ENCODE measurements at regions of chr6 and their contacts with region 1.

Region 1: GRCh38 chr6:28940858-28941680 is 17.3 kb upstream of the TRIM27 start:
- DNase-seq: peak; percentile 90
- H3K4me3 ChIP-seq: peak overlapping the region; percentile 46 to 61 (median 53)
- H3K27ac ChIP-seq: peak overlapping the region; percentile 66 to 84 (median 78)
- H3K4me1 ChIP-seq: peaks cover 0 to 24% (median 15%) of the 10 kb centered on the region in 4 donors
- H3K27me3 ChIP-seq: no peaks in the 10 kb centered on the region
- CTCF ChIP-seq: no peak
- EP300 ChIP-seq: no peak
- POLR2A ChIP-seq: no peak

Region 2: GRCh38 chr6:27479319-27480182 is 1461.5 kb before region 1 on chr6:
- intact Hi-C with region 1: loop called (anchors 5 kb)
- DNase-seq: peak; percentile 91
- H3K4me3 ChIP-seq: peak overlapping the region; percentile 64 to 74 (median 68)
- H3K27ac ChIP-seq: peak overlapping the region; percentile 91 to 96 (median 95)
- H3K4me1 ChIP-seq: peaks cover 0 to 14% (median 9%) of the 10 kb centered on the region in 4 donors
- H3K27me3 ChIP-seq: no peaks in the 10 kb centered on the region
- CTCF ChIP-seq: no peak
- EP300 ChIP-seq: no peak
- POLR2A ChIP-seq: no peak

Region 3: DNA sequence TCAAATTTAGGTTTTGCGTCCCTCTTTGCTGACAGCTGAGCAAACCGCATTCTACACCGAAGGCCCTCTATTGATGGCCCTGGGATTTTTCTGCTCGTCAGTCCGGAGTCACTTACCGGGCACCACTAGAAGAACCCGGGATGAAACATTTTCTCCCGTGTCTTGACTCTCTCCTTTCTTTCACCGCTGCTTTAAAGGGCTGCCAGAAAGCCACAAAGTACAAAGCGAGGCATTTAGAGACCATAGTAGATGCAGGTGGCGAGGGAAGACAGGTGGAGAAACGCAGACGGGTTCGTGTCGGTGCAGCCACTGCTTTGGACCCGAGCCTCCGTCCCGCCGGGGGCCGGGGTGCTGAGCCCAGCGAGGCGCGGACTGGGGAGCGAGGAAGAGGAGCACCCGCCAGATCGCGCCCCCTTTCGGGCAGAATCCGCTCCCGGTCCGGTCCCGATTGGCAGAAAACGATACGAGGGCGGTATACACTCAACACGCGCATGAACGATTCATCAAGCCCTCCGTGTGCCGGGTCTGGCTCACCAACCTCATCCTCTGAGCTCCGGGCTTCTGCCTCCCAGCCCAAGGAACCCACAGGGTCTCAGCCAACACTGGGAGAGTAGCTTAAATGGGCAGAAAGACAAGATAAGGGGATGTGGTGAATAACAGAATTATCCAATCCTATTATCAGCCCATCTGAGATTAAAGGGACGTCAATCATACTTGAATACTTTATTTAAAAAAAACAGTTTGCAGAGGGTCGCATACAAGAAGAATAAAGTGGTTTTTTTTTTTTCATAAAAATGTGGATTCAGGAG is 102.2 kb before region 1 on chr6:
- intact Hi-C with region 1: loop called (anchors 5 kb)
- DNase-seq: peak; percentile 90
- H3K4me3 ChIP-seq: peak overlapping the region; percentile 47 to 59 (median 58)
- H3K27ac ChIP-seq: peak overlapping the region; percentile 76 to 80 (median 78)
- H3K4me1 ChIP-seq: peaks cover 0 to 16% (median 11%) of the 10 kb centered on the region in 4 donors
- H3K27me3 ChIP-seq: peaks cover 0 to 16% (median 1%) of the 10 kb centered on the region in 3 donors
- CTCF ChIP-seq: peak; percentile 16 to 60 (median 27)
- EP300 ChIP-seq: no peak
- POLR2A ChIP-seq: no peak

Region 4: DNA sequence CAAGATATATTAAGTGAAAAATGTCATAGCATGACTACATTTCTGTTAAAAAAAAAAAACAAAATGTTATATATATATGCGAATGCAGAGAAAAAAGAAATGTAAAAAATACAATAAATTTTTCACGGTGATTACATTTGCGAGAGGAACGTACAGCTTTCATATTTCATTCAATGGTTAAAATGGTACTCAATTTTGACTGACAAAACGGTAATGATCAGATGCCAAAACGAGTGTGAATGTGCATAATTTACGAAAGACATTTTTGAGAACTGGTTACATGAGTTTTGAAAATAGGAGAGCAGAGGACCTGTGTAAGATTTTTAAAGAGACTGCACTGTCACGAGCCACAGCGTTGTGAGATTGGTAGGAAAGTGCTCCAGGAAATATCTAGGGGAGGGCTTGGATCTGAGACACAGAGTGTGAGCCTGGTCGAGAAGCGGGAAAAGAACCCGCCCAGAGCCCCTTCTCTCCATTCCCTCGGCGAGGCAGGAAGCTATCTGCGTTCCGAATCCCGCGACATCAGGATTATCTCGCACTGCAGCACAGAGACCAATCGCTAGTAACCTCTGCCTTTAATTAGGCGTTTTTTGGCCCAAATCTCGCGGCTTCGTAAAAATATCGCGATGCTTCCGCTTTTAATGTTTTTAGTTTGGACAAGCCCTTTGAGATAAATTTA is 45.8 kb before region 1 on chr6:
- intact Hi-C with region 1: loop called (anchors 1 kb)
- DNase-seq: peak; percentile 97
- H3K4me3 ChIP-seq: peak overlapping the region; percentile 58 to 76 (median 70)
- H3K27ac ChIP-seq: peak overlapping the region; percentile 96 to 99 (median 97)
- H3K4me1 ChIP-seq: peaks cover 0 to 16% (median 7%) of the 10 kb centered on the region in 4 donors
- H3K27me3 ChIP-seq: no peaks in the 10 kb centered on the region
- CTCF ChIP-seq: no peak
- EP300 ChIP-seq: no peak
- POLR2A ChIP-seq: peak; percentile 38 to 64

Region 5: DNA sequence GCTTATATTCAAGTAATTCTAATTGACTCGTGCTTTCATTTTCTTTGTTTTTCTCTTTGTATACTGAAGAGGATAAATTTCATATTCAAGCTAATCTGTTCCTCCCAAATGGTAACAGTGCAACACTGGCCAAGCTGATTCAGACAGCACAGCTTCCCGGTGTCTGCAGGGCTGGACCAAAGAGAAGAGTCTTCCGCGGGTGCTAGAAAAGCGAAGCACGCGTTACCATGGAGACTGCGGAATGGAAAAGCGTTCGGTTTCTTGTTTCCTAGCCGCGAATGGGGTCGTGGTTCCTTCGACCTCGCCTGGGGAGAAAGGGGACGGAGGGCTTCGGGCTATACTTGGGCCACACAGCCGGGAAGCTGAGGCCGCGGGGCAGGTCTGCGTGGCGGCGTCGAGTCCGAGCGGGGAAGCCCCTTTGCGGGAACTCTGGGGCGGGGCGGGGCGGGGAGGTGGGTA is 70.2 kb after region 1 on chr6:
- intact Hi-C with region 1: loop called (anchors 2 kb)
- DNase-seq: peak; percentile 76
- H3K4me3 ChIP-seq: peak overlapping the region; percentile 25 to 53 (median 45)
- H3K27ac ChIP-seq: peak overlapping the region in 1 of 4 donors; percentile 6
- H3K4me1 ChIP-seq: peaks cover 0 to 24% (median 16%) of the 10 kb centered on the region in 4 donors
- H3K27me3 ChIP-seq: peaks cover 9 to 22% (median 17%) of the 10 kb centered on the region in 3 donors
- CTCF ChIP-seq: no peak
- EP300 ChIP-seq: no peak
- POLR2A ChIP-seq: no peak

Measured in sigmoid colon (tissue), 7 donors.